ACHN (cell line): ENCODE measurements at regions of chr22 and their contacts with region 1.

Region 1: GRCh38 chr22:36775964-36776669 is at the start of gene IFT27:
- DNase-seq: peak; percentile 99

Region 2: GRCh38 chr22:36546092-36546804 is 229.9 kb before region 1 on chr22:
- in situ Hi-C with region 1: loop called (anchors 10 kb)
- DNase-seq: peak; percentile 78

Region 3: GRCh38 chr22:36741204-36741793 is 34.8 kb before region 1 on chr22:
- in situ Hi-C with region 1: no loop called
- DNase-seq: no peak

Region 4: DNA sequence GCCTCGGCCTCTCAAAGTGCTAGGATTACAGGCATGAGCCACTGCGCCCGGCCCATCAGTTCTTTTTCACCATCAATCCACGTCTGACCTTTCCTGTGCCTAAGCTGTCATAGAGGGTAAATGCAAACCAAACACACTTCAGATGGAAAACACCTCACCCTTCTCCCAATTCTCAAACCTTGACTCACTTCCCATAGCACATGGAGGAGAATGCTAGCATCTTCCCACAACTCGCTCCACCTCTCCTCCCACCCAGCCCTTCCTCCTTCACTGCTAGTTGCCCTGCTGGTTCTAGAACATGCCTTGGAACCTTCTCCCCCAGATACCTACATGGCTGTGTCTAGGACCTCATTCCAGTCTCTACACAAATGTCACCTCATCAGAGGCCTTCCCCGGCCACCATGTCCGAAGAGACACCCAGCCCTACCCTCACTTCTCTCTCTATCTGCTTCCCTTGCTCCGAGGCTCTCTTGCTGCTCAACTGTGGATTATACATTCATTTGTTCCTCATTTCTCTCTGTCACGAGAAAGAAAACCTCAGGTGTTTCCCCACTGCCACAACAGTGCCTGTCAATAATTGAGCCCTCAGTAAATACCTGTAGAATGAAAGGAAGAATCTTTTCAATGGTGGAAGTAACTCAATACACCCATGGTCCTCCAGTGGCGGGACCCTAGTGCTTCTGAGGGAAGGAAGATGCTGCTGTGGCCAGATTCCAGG is 63.4 kb after region 1 on chr22:
- in situ Hi-C with region 1: no loop called
- DNase-seq: no peak

Region 5: GRCh38 chr22:36856121-36856791 is 80.1 kb after region 1 on chr22:
- in situ Hi-C with region 1: no loop called
- DNase-seq: peak; percentile 74